IMR-90 (cell line): ENCODE measurements at regions of chr7 and their contacts with region 1.

Region 1: DNA sequence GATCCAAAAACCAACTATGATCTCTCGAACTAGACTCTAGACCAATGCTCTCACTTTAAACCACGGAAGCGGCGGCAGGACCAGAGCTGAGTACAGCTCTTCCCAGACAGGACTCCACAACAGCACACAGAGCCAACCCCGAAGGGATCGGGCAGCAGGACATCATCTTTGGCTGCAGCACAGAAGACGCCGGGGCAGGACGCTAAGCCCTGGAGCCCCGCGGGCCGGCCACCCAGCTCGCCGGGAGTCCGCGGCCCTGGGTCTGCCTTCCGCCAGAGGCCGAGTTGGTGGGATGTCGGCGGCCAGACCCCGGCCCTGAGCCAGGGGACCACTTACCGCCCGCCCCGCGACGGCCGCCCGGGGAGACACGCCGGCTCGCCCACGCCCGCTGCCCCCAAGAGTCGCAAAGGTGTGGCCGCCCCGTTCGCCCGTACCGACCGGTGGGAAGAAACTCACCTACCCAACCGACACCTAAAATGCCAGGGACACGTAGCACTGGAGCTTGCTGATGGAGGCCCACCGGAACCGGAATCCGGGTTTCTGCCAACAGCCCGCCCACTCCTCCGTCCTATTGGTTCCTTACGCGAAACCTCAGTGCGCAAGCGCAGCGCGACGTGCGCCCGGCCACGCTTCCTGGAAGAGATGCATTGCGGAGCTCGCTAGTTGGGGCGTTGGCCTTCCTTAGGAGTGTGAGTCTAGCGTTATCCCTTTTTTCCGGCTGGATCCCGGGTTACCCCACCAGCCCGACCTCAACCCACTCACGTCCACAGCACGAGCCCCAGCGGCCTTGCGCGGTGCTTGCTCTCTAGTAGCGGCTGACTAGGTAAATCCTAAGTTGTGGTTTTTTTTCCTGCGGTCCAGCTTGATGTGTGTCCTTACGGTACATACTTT is at the start of gene SEC61G:
- DNase-seq: peak; percentile 97
- ATAC-seq: peak; percentile 94
- H3K4me3 ChIP-seq: peak within 1 kb of the TSS; percentile 67
- H3K27ac ChIP-seq: peak within 1 kb of the TSS; percentile 94
- H3K4me1 ChIP-seq: no peaks in the 10 kb centered on the region; the same call in 1 of the 2 replicates
- H3K27me3 ChIP-seq: no peaks in the 10 kb centered on the region
- CTCF ChIP-seq: no peak
- POLR2A ChIP-seq: peak; percentile 95
- RAD21 ChIP-seq: no peak
- total RNA-seq, gene SEC61G: 387 and 3,014 TPM in 2 replicates

Region 2: GRCh38 chr7:56092789-56093531 is 1334.0 kb after region 1 on chr7 and contains the start of gene PHKG1:
- CTCF ChIA-PET with region 1: no interaction called
- POLR2A ChIA-PET with region 1: no interaction called
- dilution Hi-C with region 1: no loop called
- in situ Hi-C with region 1: loop called (anchors 25 kb)
- intact Hi-C with region 1: no loop called
- DNase-seq: peak; percentile 81
- ATAC-seq: peak; percentile 94
- H3K4me3 ChIP-seq: no peak within 1 kb of the TSS
- H3K27ac ChIP-seq: peak within 1 kb of the TSS; percentile 15; the same call in 1 of the 2 replicates
- H3K4me1 ChIP-seq: peaks cover 9% of the 10 kb centered on the region
- H3K27me3 ChIP-seq: no peaks in the 10 kb centered on the region
- CTCF ChIP-seq: peak; percentile 27
- POLR2A ChIP-seq: no peak
- RAD21 ChIP-seq: peak; percentile 38
- total RNA-seq, gene PHKG1: under 0.01 and 0.72 TPM in 2 replicates